ENCODE measurements at regions of chr17 and their contacts with region 1.

Region 1: DNA sequence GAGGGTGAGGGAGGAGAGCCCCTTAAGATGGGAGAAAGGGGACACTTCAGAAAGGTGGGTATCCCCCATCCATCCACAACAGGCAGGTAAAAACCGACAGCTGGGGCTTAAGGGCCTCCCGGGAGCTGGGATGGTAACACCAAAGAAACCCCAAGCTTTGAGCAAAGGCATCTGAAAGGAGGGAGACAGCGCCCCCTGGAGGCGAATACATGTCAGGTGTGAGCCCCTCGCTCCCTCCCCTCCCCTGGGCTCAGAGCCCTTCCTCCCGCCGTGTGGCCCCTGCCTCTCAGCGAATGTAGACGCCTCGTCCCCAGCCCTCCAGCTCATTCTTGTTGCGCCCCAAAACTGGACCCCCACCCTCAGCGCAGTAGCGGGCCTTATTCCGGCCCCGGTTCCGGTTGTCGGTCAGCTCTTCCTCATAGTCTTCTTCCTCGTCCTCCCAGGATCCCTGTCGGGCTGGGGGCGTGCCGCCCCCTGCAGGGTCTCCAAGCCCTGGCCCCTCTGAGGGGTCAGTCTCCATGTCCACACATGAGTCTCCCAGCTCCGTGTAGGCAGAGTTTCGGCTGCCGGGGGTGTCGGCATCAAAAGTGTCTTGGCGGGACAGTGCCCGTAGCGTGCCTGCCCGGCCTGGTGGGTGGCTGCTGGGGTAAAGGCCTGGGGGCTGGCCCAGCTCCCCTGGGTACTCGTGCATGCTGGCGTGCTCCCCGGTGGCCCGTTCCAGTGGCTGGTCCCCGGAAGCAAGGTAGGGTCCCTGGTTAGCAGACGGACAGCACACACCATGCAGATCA is 9.1 kb upstream of the ARL5C start:
- DNase-seq: no peak
- H3K4me3 ChIP-seq: no peak overlapping the region
- H3K27me3 ChIP-seq: no peaks in the 10 kb centered on the region
- CTCF ChIP-seq: peak; percentile 87

Region 2: GRCh38 chr17:39186481-39187002 is 11.4 kb after region 1 on chr17:
- CTCF ChIA-PET with region 1: interaction called, 26 read pairs
- POLR2A ChIA-PET with region 1: no interaction called
- DNase-seq: no peak
- H3K4me3 ChIP-seq: no peak overlapping the region
- H3K27me3 ChIP-seq: no peaks in the 10 kb centered on the region
- CTCF ChIP-seq: no peak

Region 3: GRCh38 chr17:39194089-39194984 is 19.2 kb after region 1 on chr17:
- CTCF ChIA-PET with region 1: interaction called, 26 read pairs
- POLR2A ChIA-PET with region 1: no interaction called
- DNase-seq: no peak
- H3K4me3 ChIP-seq: no peak overlapping the region
- H3K27me3 ChIP-seq: no peaks in the 10 kb centered on the region
- CTCF ChIP-seq: peak; percentile 65